Right lobe of liver (tissue), 6 donors: ENCODE measurements at regions of chr1 and their contacts with region 1.

Region 1: GRCh38 chr1:164836614-164837018 is 277.6 kb downstream of the PBX1 start:
- DNase-seq: no peak
- ATAC-seq: no peak
- H3K4me3 ChIP-seq: no peak overlapping the region
- H3K27ac ChIP-seq: no peak overlapping the region
- H3K4me1 ChIP-seq: no peaks in the 10 kb centered on the region
- H3K27me3 ChIP-seq: no peaks in the 10 kb centered on the region
- CTCF ChIP-seq: no peak
- POLR2A ChIP-seq: no peak

Region 2: DNA sequence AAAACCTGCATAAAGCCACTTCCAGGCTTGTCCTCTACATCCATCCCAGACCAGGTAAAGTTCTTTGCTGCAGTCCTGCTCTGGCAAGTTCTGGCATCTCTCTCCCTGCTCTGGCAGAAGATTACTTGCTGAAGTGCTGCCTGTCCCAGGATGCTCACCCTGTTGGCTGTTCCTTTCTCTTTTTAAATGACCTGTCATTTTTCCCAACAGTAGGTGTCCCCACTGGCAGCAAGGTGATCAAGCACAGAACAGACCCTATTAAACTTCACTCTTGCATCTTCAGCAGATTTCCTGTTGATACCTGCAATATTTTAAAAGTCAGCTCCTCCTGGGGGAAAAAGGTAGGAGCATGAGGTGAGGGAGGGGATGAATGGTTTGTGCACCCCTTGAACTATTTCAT is 55.0 kb after region 1 on chr1:
- intact Hi-C with region 1: loop called in 1 of 2 experiments (anchors 10 kb)
- DNase-seq: no peak
- ATAC-seq: no peak
- H3K4me3 ChIP-seq: no peak overlapping the region
- H3K27ac ChIP-seq: no peak overlapping the region
- H3K4me1 ChIP-seq: no peaks in the 10 kb centered on the region
- H3K27me3 ChIP-seq: no peaks in the 10 kb centered on the region
- CTCF ChIP-seq: no peak
- POLR2A ChIP-seq: no peak